ENCODE measurements at regions of chr1 and their contacts with region 1.

Region 1: GRCh38 chr1:179709841-179710329 is 33.2 kb upstream of the FAM163A start:
- DNase-seq: no peak
- ATAC-seq: peak; percentile 97

Region 2: DNA sequence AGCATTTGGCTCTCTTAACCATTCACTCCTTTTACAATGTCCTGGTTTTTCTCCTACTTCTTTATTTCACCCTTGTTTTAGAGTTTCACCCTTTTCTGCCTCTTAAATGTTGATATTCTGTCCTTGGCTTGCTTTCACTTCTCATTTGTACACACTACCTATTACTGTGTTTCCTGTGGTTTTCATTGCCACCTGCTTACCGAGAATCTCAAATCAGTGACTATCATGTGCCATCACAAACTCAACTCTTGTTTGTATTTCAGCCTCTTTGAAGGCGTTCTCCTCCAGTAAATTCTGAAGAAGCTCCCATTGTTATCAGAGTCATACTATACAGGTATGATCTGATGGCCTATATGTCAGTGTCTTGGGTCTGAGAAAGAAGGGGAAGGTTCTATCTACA is 199.8 kb before region 1 on chr1:
- intact Hi-C with region 1: no loop called
- DNase-seq: no peak
- ATAC-seq: no peak

Region 3: GRCh38 chr1:179809506-179810366 is 99.9 kb after region 1 on chr1:
- intact Hi-C with region 1: loop called (anchors 2 kb)
- DNase-seq: peak; percentile 68
- ATAC-seq: peak; percentile 65